ENCODE measurements at regions of chr1 and their contacts with region 1.

Region 1: DNA sequence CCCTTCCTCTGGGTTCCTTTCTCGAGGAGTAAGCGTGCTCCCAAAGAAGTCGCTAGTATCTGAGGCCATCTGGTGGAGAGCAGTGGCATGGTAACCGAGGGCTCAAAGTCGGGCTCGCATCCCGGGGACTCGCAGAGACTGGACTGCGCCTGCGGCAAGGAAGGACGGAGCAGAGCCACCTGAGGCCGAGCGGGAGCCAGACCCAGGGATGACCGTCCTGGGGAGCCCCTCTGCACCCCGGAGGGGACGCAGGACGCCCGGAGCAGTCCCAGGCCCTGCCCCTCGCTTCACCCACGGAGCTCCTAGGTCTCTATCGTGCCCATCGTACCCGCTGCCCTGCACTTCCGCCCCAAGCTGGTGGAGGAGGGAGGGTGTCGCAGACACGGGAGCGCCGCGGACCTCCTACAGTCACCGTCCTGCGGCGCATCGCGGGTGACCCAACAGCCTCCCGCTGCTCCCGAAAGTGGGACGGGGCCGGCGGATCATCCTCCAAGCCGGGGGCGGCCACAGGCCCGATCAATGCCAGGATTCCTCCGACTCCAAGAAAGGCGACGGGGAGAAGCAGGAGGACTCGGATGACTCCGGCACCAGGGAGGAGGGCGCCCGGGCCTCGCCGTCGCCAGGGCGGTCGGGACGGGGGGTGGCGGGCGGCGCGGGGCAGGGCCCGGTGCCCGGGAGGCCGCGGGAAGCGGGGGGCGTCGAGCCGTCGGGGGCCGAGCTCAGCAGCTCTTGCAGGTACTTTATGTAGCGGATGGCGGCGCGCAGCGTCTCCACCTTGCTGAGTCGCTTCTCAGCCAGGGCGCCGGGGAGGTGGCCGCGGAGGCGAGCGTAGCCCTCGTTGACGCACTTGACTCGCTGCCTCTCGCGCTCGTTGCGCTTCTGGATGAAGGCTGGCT is 2.3 kb upstream of the CACNA1S start:
- DNase-seq: peak; percentile 93 to 98
- ATAC-seq: peak; percentile 93 to 97
- H3K4me3 ChIP-seq: peak overlapping the region; percentile 80
- H3K27ac ChIP-seq: peak overlapping the region; percentile 87 to 89
- H3K4me1 ChIP-seq: peaks cover 8% of the 10 kb centered on the region
- CTCF ChIP-seq: peak; percentile 84
- EP300 ChIP-seq: no peak
- POLR2A ChIP-seq: peak; percentile 78
- RAD21 ChIP-seq: peak; percentile 90 to 91

Region 2: DNA sequence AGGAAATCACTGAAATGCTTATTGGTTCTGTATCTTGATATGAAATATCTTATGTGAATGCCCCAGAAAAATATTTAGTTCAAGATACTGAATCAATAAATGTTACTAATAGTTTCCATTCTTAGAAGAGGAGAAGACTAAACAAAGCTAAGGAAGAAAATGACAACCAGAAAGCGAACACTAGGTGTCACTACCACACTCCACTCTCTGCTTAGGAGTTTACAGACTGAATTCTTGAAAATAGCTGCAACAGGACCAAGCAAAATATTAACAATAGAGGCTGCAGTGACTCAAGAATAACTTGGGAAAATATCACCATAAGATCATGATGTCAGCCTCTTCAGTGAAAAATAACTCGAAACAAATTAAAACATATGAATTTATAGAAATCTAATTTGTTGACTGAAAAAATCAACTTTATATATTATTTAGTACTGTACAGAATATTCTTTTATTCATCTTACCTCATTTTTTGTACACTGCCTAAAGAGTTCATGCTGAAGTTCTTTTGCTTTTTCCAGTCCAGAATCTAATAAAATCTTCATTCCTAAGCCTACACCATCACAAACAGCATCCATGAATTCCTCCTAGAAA is 555.5 kb before region 1 on chr1:
- CTCF ChIA-PET with region 1: interaction called, 11 read pairs
- POLR2A ChIA-PET with region 1: interaction called, 8 read pairs
- DNase-seq: peak; percentile 44 to 64
- ATAC-seq: peak; percentile 85 to 89
- H3K4me3 ChIP-seq: no peak overlapping the region
- H3K27ac ChIP-seq: no peak overlapping the region
- H3K4me1 ChIP-seq: no peaks in the 10 kb centered on the region
- CTCF ChIP-seq: peak; percentile 85
- EP300 ChIP-seq: no peak
- POLR2A ChIP-seq: no peak
- RAD21 ChIP-seq: peak; percentile 67 to 68

Region 3: DNA sequence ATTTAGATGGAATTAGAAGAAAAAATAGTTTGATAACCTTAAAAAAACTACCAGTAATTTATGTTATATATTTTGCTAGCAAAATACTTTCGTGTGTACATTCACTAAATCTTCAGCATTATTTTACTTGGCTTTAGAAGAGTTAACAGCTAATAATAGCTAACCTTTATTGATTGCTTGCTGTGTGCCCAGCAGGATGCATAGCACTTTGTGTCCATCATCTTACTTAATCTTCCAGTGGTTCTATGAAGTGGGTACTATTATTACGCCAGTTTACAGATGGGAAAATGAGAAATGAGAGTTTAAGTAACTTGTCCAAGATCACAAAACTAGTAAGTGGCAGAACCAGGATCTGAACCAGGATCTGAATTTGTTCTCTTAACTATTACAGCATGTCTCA is 283.4 kb before region 1 on chr1:
- CTCF ChIA-PET with region 1: no interaction called
- POLR2A ChIA-PET with region 1: no interaction called
- DNase-seq: no peak
- ATAC-seq: no peak
- H3K4me3 ChIP-seq: no peak overlapping the region
- H3K27ac ChIP-seq: no peak overlapping the region
- H3K4me1 ChIP-seq: no peaks in the 10 kb centered on the region
- CTCF ChIP-seq: no peak
- EP300 ChIP-seq: no peak
- POLR2A ChIP-seq: no peak
- RAD21 ChIP-seq: no peak

Region 4: DNA sequence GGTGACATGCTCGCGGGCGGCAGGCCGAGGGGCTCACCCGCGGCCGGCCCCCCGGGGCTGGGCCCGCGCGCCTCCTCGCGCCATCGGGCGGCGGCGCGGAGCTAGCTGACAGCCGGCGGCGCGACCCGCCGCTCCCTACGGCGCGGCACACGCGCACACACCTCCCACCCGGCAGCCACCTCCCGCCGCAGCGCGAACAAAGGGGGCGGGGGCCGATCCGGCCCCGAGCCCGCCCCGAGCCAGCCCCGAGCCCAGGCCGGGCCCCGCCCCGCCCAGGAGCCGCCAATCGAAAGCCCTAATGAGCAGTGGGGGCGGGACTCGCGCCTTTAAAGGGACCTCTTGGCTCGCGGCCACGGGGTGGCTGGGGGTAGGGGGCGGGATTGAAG is 91.0 kb before region 1 on chr1 and contains the start of gene KIF21B:
- CTCF ChIA-PET with region 1: interaction called, 12 read pairs
- POLR2A ChIA-PET with region 1: no interaction called
- DNase-seq: peak; percentile 59 to 88
- ATAC-seq: peak; percentile 66 to 85
- H3K4me3 ChIP-seq: peak within 1 kb of the TSS; percentile 76
- H3K27ac ChIP-seq: peak within 1 kb of the TSS; percentile 64 to 96
- H3K4me1 ChIP-seq: peaks cover 64% of the 10 kb centered on the region
- CTCF ChIP-seq: no peak
- EP300 ChIP-seq: no peak
- POLR2A ChIP-seq: no peak
- RAD21 ChIP-seq: no peak
- polyA plus RNA-seq, gene KIF21B: 3.6 and 3.8 TPM in 2 replicates

Region 5: DNA sequence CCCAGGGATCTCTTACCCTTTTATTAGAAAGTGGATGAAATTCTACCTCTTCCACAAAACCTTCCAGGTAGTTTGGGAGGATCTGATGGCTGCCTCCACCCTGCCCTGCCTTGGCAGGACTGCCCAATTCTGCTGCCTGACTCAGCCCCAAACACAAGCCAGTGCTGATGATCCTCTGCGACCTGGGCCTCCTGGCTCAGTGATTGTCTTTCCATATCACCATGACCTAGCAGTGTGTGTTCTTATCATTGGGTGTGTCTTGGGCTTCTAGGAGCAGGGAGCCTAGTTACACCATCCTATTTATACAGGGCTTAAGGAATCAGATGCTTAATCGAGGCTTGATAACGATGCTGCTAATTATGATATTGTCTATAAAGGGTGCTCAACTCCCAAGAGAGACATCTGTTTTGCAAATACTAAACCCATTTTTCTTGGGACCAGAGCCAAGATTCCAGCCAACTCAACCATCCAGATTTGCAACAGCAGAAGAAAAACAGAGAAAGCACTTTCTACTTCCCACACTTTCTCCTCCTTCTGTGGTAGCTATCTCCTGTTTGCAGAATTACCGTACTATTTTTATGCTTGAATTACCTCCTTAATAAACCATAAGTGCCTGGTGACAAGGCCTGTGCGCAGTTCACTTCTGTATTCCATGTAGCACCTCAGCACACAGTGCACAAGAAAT is 54.5 kb before region 1 on chr1:
- CTCF ChIA-PET with region 1: no interaction called
- POLR2A ChIA-PET with region 1: no interaction called
- DNase-seq: peak in 1 of 2 experiments; percentile 28
- ATAC-seq: peak in 1 of 2 experiments; percentile 38; a peak in 3 of 6 replicates
- H3K4me3 ChIP-seq: no peak overlapping the region
- H3K27ac ChIP-seq: no peak overlapping the region
- H3K4me1 ChIP-seq: 0 out of 3 replicates have a peak, but pooled peaks cover 4% of the 10 kb centered on the region
- CTCF ChIP-seq: no peak
- EP300 ChIP-seq: no peak
- POLR2A ChIP-seq: no peak
- RAD21 ChIP-seq: no peak

Region 6: GRCh38 chr1:201085916-201086735 is 28.4 kb before region 1 on chr1:
- CTCF ChIA-PET with region 1: interaction called, 83 read pairs
- POLR2A ChIA-PET with region 1: interaction called, 4 read pairs
- DNase-seq: peak; percentile 61 to 93
- ATAC-seq: peak; percentile 97 to 99
- H3K4me3 ChIP-seq: no peak overlapping the region
- H3K27ac ChIP-seq: no peak overlapping the region
- H3K4me1 ChIP-seq: no peaks in the 10 kb centered on the region
- CTCF ChIP-seq: peak; percentile 82
- EP300 ChIP-seq: no peak
- POLR2A ChIP-seq: no peak
- RAD21 ChIP-seq: peak; percentile 75 to 80

Region 7: GRCh38 chr1:201126832-201127754 is 12.6 kb after region 1 on chr1 and contains the start of gene ASCL5:
- CTCF ChIA-PET with region 1: interaction called, 22 read pairs
- POLR2A ChIA-PET with region 1: interaction called, 3 read pairs
- DNase-seq: peak; percentile 53 to 84
- ATAC-seq: peak; percentile 80 to 88
- H3K4me3 ChIP-seq: no peak within 1 kb of the TSS
- H3K27ac ChIP-seq: peak within 1 kb of the TSS; percentile 36 to 73; a peak in 4 of 6 replicates
- H3K4me1 ChIP-seq: peaks cover 19% of the 10 kb centered on the region; the same call in 2 of the 3 replicates
- CTCF ChIP-seq: no peak
- EP300 ChIP-seq: no peak
- POLR2A ChIP-seq: no peak
- RAD21 ChIP-seq: 0 out of 5 replicates have a peak, but pooled peaks of 1 of the 2 experiments have one; percentile 16
- polyA plus RNA-seq, gene ASCL5: 0.07 TPM in 1 of 2 replicates, not detected in the other

Region 8: DNA sequence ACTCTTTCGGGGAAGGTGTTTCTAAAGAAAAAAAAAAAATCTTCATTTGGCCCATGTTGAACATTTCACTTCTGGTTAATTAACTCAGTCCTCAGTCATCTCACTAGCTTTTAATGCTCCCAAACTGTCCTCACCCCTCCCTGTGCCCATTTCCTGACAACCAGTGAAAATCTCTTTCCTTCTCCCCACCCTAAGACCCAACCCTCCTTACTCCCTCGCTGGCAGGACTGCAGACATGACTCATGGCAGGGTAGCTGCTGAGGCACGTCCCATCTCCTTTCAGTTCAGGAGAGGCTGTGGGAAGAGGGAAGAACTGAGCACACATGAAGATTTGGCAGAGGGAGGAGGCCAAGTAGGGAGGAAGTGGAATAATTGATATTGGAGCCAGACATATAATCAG is 181.4 kb after region 1 on chr1:
- CTCF ChIA-PET with region 1: no interaction called
- POLR2A ChIA-PET with region 1: no interaction called
- DNase-seq: peak; percentile 48 to 64
- ATAC-seq: peak; percentile 48 to 76; a peak in 3 of 6 replicates
- H3K4me3 ChIP-seq: no peak overlapping the region
- H3K27ac ChIP-seq: peak overlapping the region; percentile 30 to 73
- H3K4me1 ChIP-seq: peaks cover 39% of the 10 kb centered on the region
- CTCF ChIP-seq: no peak
- EP300 ChIP-seq: no peak
- POLR2A ChIP-seq: no peak; the same call in 1 of the 2 replicates
- RAD21 ChIP-seq: no peak

Measured in A549 (cell line).